ENCODE measurements at regions of chr4 and their contacts with region 1.

Region 1: GRCh38 chr4:128863312-128864075 is 54.0 kb downstream of the JADE1 start:
- DNase-seq: peak; percentile 77 to 84
- ATAC-seq: peak; percentile 67 to 88 (median 72)
- H3K4me3 ChIP-seq: no peak overlapping the region
- H3K27ac ChIP-seq: no peak overlapping the region
- H3K4me1 ChIP-seq: peaks cover 17% of the 10 kb centered on the region
- H3K27me3 ChIP-seq: no peaks in the 10 kb centered on the region
- CTCF ChIP-seq: peak; percentile 92

Region 2: GRCh38 chr4:128191115-128191781 is 672.2 kb before region 1 on chr4:
- intact Hi-C with region 1: loop called (anchors 5 kb)
- DNase-seq: peak; percentile 40 to 66
- ATAC-seq: peak; percentile 85 to 96 (median 89)
- H3K4me3 ChIP-seq: no peak overlapping the region
- H3K27ac ChIP-seq: no peak overlapping the region
- H3K4me1 ChIP-seq: no peaks in the 10 kb centered on the region
- H3K27me3 ChIP-seq: no peaks in the 10 kb centered on the region
- CTCF ChIP-seq: peak; percentile 83

Region 3: GRCh38 chr4:128427832-128428366 is 435.6 kb before region 1 on chr4:
- intact Hi-C with region 1: loop called in 1 of 2 experiments (anchors 2 kb)
- DNase-seq: no peak
- ATAC-seq: peak; percentile 79 to 95 (median 94)
- H3K4me3 ChIP-seq: peak overlapping the region; percentile 11
- H3K27ac ChIP-seq: peak overlapping the region; percentile 46
- H3K4me1 ChIP-seq: peaks cover 14% of the 10 kb centered on the region
- H3K27me3 ChIP-seq: no peaks in the 10 kb centered on the region
- CTCF ChIP-seq: peak; percentile 41

Region 4: DNA sequence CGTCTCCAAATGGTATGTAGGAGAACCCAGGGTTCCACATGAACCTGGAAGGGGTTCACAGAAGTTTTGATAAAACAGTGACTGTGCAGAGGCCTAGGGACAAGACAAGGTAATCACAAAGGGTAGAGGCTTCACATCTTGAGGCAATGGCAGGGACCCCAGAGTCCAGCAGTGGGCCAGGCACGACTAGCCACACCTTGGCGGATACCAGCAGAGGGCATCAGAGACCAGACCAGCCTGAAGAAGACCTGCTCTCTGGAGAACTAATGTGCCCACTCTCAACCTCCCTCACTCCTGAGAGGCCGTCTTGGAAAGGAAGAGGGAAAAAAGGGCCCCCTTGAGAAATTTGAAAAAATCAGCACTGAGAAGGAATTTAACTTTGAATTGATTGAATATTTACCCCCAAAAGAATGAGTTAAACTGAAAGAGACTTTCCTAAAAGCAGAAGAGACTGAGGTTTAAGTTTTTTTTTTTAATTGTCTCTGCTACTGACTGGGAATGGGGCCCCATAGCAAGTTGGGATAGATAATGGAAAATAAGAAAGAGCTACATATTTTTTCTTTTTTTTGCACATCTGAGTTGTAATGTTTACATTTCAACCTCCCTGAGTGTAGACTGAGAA is 297.8 kb before region 1 on chr4:
- intact Hi-C with region 1: loop called (anchors 5 to 10 kb)
- DNase-seq: peak; percentile 30 to 56
- ATAC-seq: peak; percentile 58 to 80 (median 71)
- H3K4me3 ChIP-seq: no peak overlapping the region
- H3K27ac ChIP-seq: no peak overlapping the region
- H3K4me1 ChIP-seq: peaks cover 4% of the 10 kb centered on the region
- H3K27me3 ChIP-seq: no peaks in the 10 kb centered on the region
- CTCF ChIP-seq: peak; percentile 42

Region 5: GRCh38 chr4:128574706-128575105 is 288.8 kb before region 1 on chr4:
- intact Hi-C with region 1: loop called (anchors 5 to 10 kb)
- DNase-seq: peak; percentile 57 to 75
- ATAC-seq: peak in 3 of 4 donors; percentile 68 to 73 (median 69)
- H3K4me3 ChIP-seq: no peak overlapping the region
- H3K27ac ChIP-seq: no peak overlapping the region
- H3K4me1 ChIP-seq: peaks cover 28% of the 10 kb centered on the region
- H3K27me3 ChIP-seq: no peaks in the 10 kb centered on the region
- CTCF ChIP-seq: peak; percentile 45

Region 6: GRCh38 chr4:128782076-128782715 is 81.3 kb before region 1 on chr4:
- intact Hi-C with region 1: loop called (anchors 1 to 2 kb)
- DNase-seq: peak; percentile 36 to 66
- ATAC-seq: peak; percentile 78 to 96 (median 88)
- H3K4me3 ChIP-seq: no peak overlapping the region
- H3K27ac ChIP-seq: no peak overlapping the region
- H3K4me1 ChIP-seq: no peaks in the 10 kb centered on the region
- H3K27me3 ChIP-seq: no peaks in the 10 kb centered on the region
- CTCF ChIP-seq: peak; percentile 58